Endothelial cell of umbilical vein (primary cell): ENCODE measurements at regions of chr6 and their contacts with region 1.

Region 1: DNA sequence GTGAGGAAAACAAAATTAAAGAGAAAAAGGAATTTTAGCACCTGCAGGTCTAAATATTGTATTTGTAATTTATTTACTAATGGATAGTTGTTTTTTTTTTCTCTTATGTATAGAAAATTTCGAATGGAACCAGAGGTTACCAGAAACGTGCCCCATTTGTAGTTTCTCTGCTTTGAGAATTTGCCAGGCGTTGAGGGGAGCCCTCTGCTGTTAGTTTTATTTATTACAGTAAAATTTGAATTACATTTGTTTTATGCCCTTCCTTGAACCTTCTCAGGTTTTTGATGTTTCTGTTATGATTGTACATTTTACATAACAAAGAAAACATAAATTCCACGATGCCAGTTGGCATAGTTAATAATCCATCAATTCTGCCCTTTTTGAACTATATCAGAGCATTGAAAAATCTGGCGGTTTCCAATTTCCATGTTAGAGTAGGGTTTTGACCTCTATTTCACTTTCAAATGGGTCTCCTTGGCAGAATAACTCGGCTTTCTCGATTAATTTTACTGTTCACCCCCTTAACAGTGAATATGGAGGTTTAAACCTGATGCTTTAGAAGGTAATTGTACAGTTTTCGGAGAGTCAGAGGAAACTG is 35.1 kb upstream of the RFPL4B start:
- DNase-seq: peak; percentile 51
- H3K4me3 ChIP-seq: no peak overlapping the region
- H3K27ac ChIP-seq: no peak overlapping the region
- H3K4me1 ChIP-seq: no peaks in the 10 kb centered on the region
- H3K27me3 ChIP-seq: no peaks in the 10 kb centered on the region
- CTCF ChIP-seq: peak; percentile 37 to 43
- POLR2A ChIP-seq: no peak

Region 2: GRCh38 chr6:112188906-112189305 is 123.1 kb before region 1 on chr6:
- CTCF ChIA-PET with region 1: interaction called, 12 read pairs
- POLR2A ChIA-PET with region 1: no interaction called
- dilution Hi-C with region 1: no loop called
- intact Hi-C with region 1: no loop called
- DNase-seq: no peak
- H3K4me3 ChIP-seq: no peak overlapping the region
- H3K27ac ChIP-seq: no peak overlapping the region
- H3K4me1 ChIP-seq: peaks cover 12% of the 10 kb centered on the region
- H3K27me3 ChIP-seq: no peaks in the 10 kb centered on the region
- CTCF ChIP-seq: no peak
- POLR2A ChIP-seq: no peak

Region 3: GRCh38 chr6:112282221-112282620 is 29.8 kb before region 1 on chr6:
- CTCF ChIA-PET with region 1: interaction called, 19 read pairs
- POLR2A ChIA-PET with region 1: no interaction called
- dilution Hi-C with region 1: no loop called
- intact Hi-C with region 1: no loop called
- DNase-seq: peak; percentile 72
- H3K4me3 ChIP-seq: no peak overlapping the region
- H3K27ac ChIP-seq: no peak overlapping the region
- H3K4me1 ChIP-seq: peaks cover 17% of the 10 kb centered on the region
- H3K27me3 ChIP-seq: no peaks in the 10 kb centered on the region
- CTCF ChIP-seq: peak; percentile 19 to 33
- POLR2A ChIP-seq: no peak

Region 4: GRCh38 chr6:112296122-112296521 is 15.9 kb before region 1 on chr6:
- CTCF ChIA-PET with region 1: interaction called, 16 read pairs
- POLR2A ChIA-PET with region 1: no interaction called
- dilution Hi-C with region 1: no loop called
- intact Hi-C with region 1: no loop called
- DNase-seq: peak; percentile 62
- H3K4me3 ChIP-seq: no peak overlapping the region
- H3K27ac ChIP-seq: no peak overlapping the region
- H3K4me1 ChIP-seq: peaks cover 15% of the 10 kb centered on the region
- H3K27me3 ChIP-seq: no peaks in the 10 kb centered on the region
- CTCF ChIP-seq: peak; percentile 60 to 64
- POLR2A ChIP-seq: no peak

Region 5: DNA sequence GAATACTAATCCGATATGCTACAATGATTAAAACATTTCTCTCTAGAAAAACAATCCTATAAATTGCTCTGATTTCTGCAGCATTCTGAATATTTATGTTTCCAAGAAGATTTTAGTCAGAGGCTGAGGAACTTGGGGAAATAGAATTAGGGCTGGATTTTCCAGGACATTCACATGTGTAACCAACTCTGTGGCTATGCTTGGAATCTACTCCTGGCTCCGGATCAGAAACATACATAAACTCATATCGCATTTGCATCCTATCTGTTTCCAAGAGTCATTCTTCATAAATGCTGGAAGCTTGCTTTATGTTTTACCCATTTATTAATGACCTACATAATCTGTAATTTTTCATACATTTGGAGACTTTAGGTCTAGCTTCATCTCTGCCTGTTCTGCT is 1085.2 kb after region 1 on chr6:
- CTCF ChIA-PET with region 1: no interaction called
- POLR2A ChIA-PET with region 1: no interaction called
- dilution Hi-C with region 1: no loop called
- intact Hi-C with region 1: no loop called
- DNase-seq: no peak
- H3K4me3 ChIP-seq: no peak overlapping the region
- H3K27ac ChIP-seq: no peak overlapping the region
- H3K4me1 ChIP-seq: peaks cover 4% of the 10 kb centered on the region
- H3K27me3 ChIP-seq: no peaks in the 10 kb centered on the region
- CTCF ChIP-seq: no peak
- POLR2A ChIP-seq: no peak

Region 6: GRCh38 chr6:113540466-113540865 is 1228.4 kb after region 1 on chr6:
- CTCF ChIA-PET with region 1: no interaction called
- POLR2A ChIA-PET with region 1: no interaction called
- dilution Hi-C with region 1: no loop called
- intact Hi-C with region 1: no loop called
- DNase-seq: no peak
- H3K4me3 ChIP-seq: no peak overlapping the region
- H3K27ac ChIP-seq: no peak overlapping the region
- H3K4me1 ChIP-seq: no peaks in the 10 kb centered on the region
- H3K27me3 ChIP-seq: no peaks in the 10 kb centered on the region
- CTCF ChIP-seq: no peak
- POLR2A ChIP-seq: no peak